ENCODE measurements at regions of chr1 and their contacts with region 1.

Region 1: GRCh38 chr1:153494976-153495535 is 34.6 kb upstream of the S100A7 start:
- DNase-seq: peak; percentile 82 to 96
- ATAC-seq: peak; percentile 78
- H3K4me3 ChIP-seq: no peak overlapping the region
- H3K27ac ChIP-seq: no peak overlapping the region
- H3K4me1 ChIP-seq: peaks cover 0 to 8% of the 10 kb centered on the region in 2 donors
- H3K27me3 ChIP-seq: no peaks in the 10 kb centered on the region

Region 2: DNA sequence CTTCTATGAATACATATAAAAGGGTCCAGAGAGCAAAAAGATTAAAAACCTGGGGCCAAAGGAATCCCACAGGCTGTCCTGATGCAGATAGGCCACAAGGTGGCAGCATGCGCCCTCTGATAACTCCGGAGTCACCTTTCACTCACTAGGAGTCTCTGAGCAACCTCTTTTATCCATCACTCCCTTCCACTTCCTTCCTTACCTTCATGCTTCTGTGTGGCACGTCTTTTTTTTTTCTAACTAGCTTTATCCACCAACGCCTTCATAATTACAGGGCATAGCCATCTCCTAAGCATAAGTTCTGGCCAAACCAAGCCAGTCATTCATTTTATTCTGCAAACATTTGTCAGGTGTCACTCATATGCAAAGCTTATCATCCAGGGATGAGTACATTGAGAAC is 142.5 kb before region 1 on chr1:
- intact Hi-C with region 1: loop called (anchors 1 to 2 kb)
- DNase-seq: peak; percentile 79 to 85
- ATAC-seq: peak; percentile 83
- H3K4me3 ChIP-seq: no peak overlapping the region
- H3K27ac ChIP-seq: no peak overlapping the region
- H3K4me1 ChIP-seq: no peaks in the 10 kb centered on the region
- H3K27me3 ChIP-seq: no peaks in the 10 kb centered on the region

Region 3: DNA sequence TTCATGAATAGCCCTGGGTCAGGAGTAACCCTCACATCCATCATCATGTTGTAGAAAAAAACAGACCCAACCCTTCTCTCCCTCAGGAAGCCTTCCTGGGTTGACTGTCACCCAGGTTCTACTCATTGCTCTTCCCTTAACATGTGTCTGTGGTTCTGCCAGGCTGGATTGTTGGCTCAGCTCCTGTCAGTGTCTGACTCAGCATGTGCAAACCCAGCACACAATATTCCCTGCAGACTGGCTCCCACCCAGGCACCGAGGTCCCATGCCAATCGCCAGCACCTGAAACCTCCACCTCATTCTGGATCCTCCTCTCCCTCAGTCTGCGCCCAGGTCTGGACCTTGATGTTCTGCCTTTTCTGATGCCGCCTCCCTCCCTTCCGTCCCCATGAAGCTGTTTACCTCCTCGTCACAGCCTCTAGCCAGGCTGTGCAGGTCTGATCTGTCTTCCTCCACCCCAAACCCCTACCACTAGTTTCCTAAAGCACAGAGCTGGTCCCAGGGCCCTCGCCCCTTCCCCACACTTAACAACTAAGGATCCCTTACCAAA is 99.8 kb before region 1 on chr1:
- intact Hi-C with region 1: loop called in 1 of 2 experiments (anchors 5 kb)
- DNase-seq: peak in 1 of 2 donors; percentile 52
- ATAC-seq: no peak
- H3K4me3 ChIP-seq: no peak overlapping the region
- H3K27ac ChIP-seq: no peak overlapping the region
- H3K4me1 ChIP-seq: no peaks in the 10 kb centered on the region
- H3K27me3 ChIP-seq: no peaks in the 10 kb centered on the region

Region 4: DNA sequence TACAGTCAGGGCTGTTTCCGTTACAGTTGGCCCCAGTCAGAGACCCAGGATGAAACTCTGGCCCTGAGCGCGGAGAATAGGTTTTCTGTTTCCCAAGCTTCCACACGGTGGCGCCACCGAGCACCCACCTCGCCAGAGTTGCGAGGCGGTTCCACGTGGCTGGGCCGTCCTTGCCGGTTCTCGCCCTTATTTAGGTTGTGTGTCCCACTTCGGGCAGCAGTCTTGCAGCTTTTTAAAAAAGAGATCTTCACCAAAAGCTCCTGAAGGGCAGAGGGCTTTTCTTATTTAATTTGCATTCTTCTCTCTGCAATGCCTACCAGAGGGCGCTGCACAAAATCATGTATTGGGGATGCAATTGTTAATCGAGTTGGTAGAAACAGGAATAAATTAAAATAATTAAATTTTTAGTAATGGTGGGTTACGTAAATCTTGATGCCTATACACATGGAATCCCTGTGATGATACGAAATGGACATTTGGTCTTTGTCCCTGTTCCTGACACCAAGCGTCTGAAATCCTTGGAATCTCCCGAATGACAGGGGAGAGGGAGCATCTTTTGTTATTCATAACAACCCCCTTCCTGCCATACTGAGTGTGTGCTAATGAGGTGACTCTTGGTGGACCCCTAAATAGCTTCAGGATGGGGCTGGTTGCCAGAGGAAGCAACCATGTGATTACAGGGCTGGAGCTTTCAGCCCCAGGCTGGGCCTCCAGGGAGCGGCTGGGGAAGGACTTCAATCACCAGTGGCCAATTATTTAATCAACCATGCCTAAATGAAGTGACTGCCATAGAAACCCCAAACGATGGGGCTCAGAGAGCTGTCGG is 29.0 kb before region 1 on chr1:
- intact Hi-C with region 1: loop called in 1 of 2 experiments (anchors 2 kb)
- DNase-seq: peak; percentile 70 to 90
- ATAC-seq: peak; percentile 82
- H3K4me3 ChIP-seq: no peak overlapping the region
- H3K27ac ChIP-seq: no peak overlapping the region
- H3K4me1 ChIP-seq: no peaks in the 10 kb centered on the region
- H3K27me3 ChIP-seq: no peaks in the 10 kb centered on the region

Measured in aorta (tissue), 5 donors.